ENCODE measurements at regions of chr2 and their contacts with region 1.

Region 1: GRCh38 chr2:237512774-237513466 is 25.9 kb downstream of the MLPH start:
- DNase-seq: peak; percentile 72 to 90
- ATAC-seq: peak; percentile 83 to 86
- H3K4me3 ChIP-seq: no peak overlapping the region
- H3K27ac ChIP-seq: peak overlapping the region; percentile 97 to 98
- H3K4me1 ChIP-seq: peaks cover 58% of the 10 kb centered on the region
- CTCF ChIP-seq: peak; percentile 96
- EP300 ChIP-seq: no peak
- POLR2A ChIP-seq: no peak
- RAD21 ChIP-seq: peak; percentile 82 to 83

Region 2: DNA sequence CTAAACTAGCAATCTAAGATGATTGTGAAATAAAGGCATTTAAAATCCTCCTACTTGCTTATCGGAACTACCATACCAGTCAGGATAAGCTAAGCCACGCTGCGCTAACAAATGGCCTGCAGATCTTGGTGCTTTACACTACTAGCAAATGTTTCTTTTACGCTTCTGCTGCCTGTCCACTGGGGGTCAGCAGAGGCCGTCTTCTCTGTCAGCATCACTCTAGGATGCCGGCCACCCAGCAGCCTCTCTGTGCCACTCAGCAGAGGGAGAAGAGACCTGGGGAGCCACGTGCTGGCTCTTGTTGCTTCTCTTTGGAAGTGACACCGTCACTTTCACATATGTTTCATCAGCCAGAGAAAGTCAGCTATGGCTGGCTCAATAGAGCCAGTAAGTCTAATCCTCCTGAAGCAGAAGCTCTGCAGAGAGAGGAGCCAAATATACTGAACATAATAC is 390.7 kb before region 1 on chr2:
- CTCF ChIA-PET with region 1: interaction called, 12 read pairs
- POLR2A ChIA-PET with region 1: no interaction called
- DNase-seq: peak; percentile 35 to 80
- ATAC-seq: peak; percentile 92 to 97
- H3K4me3 ChIP-seq: no peak overlapping the region
- H3K27ac ChIP-seq: peak overlapping the region; percentile 44 to 73; a peak in 4 of 6 replicates
- H3K4me1 ChIP-seq: peaks cover 6% of the 10 kb centered on the region
- CTCF ChIP-seq: peak; percentile 86
- EP300 ChIP-seq: no peak
- POLR2A ChIP-seq: no peak
- RAD21 ChIP-seq: peak; percentile 91 to 92

Region 3: GRCh38 chr2:237315170-237315828 is 197.6 kb before region 1 on chr2:
- CTCF ChIA-PET with region 1: no interaction called
- POLR2A ChIA-PET with region 1: no interaction called
- DNase-seq: no peak
- ATAC-seq: no peak
- H3K4me3 ChIP-seq: no peak overlapping the region
- H3K27ac ChIP-seq: no peak overlapping the region
- H3K4me1 ChIP-seq: 0 out of 3 replicates have a peak, but pooled peaks cover 4% of the 10 kb centered on the region
- CTCF ChIP-seq: no peak
- EP300 ChIP-seq: no peak
- POLR2A ChIP-seq: no peak
- RAD21 ChIP-seq: no peak

Region 4: GRCh38 chr2:237465515-237466218 is 47.3 kb before region 1 on chr2:
- CTCF ChIA-PET with region 1: interaction called, 117 read pairs
- POLR2A ChIA-PET with region 1: no interaction called
- DNase-seq: peak in 1 of 2 experiments; percentile 64
- ATAC-seq: peak; percentile 68 to 70; a peak in 5 of 6 replicates
- H3K4me3 ChIP-seq: no peak overlapping the region
- H3K27ac ChIP-seq: peak overlapping the region; percentile 61 to 83
- H3K4me1 ChIP-seq: peaks cover 15% of the 10 kb centered on the region; the same call in 2 of the 3 replicates
- CTCF ChIP-seq: no peak
- EP300 ChIP-seq: no peak
- POLR2A ChIP-seq: no peak
- RAD21 ChIP-seq: no peak

Region 5: GRCh38 chr2:237491515-237492495 is 21.1 kb before region 1 on chr2:
- CTCF ChIA-PET with region 1: interaction called, 65 read pairs
- POLR2A ChIA-PET with region 1: interaction called, 9 read pairs
- DNase-seq: no peak
- ATAC-seq: no peak
- H3K4me3 ChIP-seq: peak overlapping the region; percentile 18; the same call in 1 of the 3 replicates
- H3K27ac ChIP-seq: peak overlapping the region; percentile 97 to 98
- H3K4me1 ChIP-seq: peaks cover 73% of the 10 kb centered on the region
- CTCF ChIP-seq: no peak
- EP300 ChIP-seq: no peak
- POLR2A ChIP-seq: no peak
- RAD21 ChIP-seq: no peak

Region 6: GRCh38 chr2:237529452-237530402 is 16.8 kb after region 1 on chr2:
- CTCF ChIA-PET with region 1: interaction called, 55 read pairs
- POLR2A ChIA-PET with region 1: interaction called, 4 read pairs
- DNase-seq: no peak
- ATAC-seq: peak in 1 of 2 experiments; percentile 14; a peak in 3 of 6 replicates
- H3K4me3 ChIP-seq: no peak overlapping the region
- H3K27ac ChIP-seq: peak overlapping the region in 1 of 2 experiments; percentile 21; a peak in 1 of 6 replicates
- H3K4me1 ChIP-seq: peaks cover 12% of the 10 kb centered on the region; the same call in 1 of the 3 replicates
- CTCF ChIP-seq: no peak
- EP300 ChIP-seq: no peak
- POLR2A ChIP-seq: no peak
- RAD21 ChIP-seq: no peak

Region 7: GRCh38 chr2:237558906-237559641 is 46.2 kb after region 1 on chr2:
- CTCF ChIA-PET with region 1: interaction called, 11 read pairs
- POLR2A ChIA-PET with region 1: interaction called, 3 read pairs
- DNase-seq: peak in 1 of 2 experiments; percentile 43
- ATAC-seq: peak; percentile 5 to 9; a peak in 4 of 6 replicates
- H3K4me3 ChIP-seq: no peak overlapping the region
- H3K27ac ChIP-seq: peak overlapping the region in 1 of 2 experiments; percentile 40; a peak in 1 of 6 replicates
- H3K4me1 ChIP-seq: peaks cover 11% of the 10 kb centered on the region; the same call in 1 of the 3 replicates
- CTCF ChIP-seq: no peak
- EP300 ChIP-seq: no peak
- POLR2A ChIP-seq: no peak
- RAD21 ChIP-seq: no peak